PC-3 (cell line): ENCODE measurements at regions of chr2 and their contacts with region 1.

Region 1: GRCh38 chr2:63544017-63544627 is 44.2 kb downstream of the WDPCP start:
- DNase-seq: peak; percentile 28
- ATAC-seq: no peak; the same call in 1 of the 2 replicates
- H3K4me3 ChIP-seq: no peak overlapping the region
- H3K27ac ChIP-seq: no peak overlapping the region
- H3K4me1 ChIP-seq: no peaks in the 10 kb centered on the region
- H3K27me3 ChIP-seq: no peaks in the 10 kb centered on the region
- CTCF ChIP-seq: peak; percentile 79

Region 2: DNA sequence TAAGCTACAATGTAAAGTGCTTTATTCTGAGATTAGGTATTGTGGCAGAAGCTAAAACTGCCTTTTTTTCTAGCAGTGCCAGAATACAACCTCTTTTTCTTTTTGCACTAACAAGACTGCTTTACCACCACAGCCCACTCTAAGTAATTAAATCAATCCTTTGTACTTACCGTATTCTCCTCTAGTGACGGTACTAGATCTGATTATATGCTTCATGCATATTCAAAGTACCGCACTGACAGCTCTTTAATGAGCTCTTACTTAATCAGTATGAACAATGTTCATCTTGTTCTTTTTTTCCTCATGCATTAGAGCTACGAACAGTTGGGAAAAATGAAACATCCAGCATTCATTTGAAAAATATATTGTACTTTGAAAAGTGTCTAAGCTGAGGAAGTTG is 509.6 kb before region 1 on chr2:
- CTCF ChIA-PET with region 1: no interaction called
- POLR2A ChIA-PET with region 1: no interaction called
- intact Hi-C with region 1: no loop called
- DNase-seq: no peak
- ATAC-seq: no peak
- H3K4me3 ChIP-seq: no peak overlapping the region
- H3K27ac ChIP-seq: no peak overlapping the region
- H3K4me1 ChIP-seq: peaks cover 15% of the 10 kb centered on the region
- H3K27me3 ChIP-seq: no peaks in the 10 kb centered on the region
- CTCF ChIP-seq: no peak

Region 3: GRCh38 chr2:63497576-63497975 is 46.5 kb before region 1 on chr2:
- CTCF ChIA-PET with region 1: no interaction called
- POLR2A ChIA-PET with region 1: no interaction called
- intact Hi-C with region 1: loop called (anchors 10 kb)
- DNase-seq: no peak
- ATAC-seq: no peak
- H3K4me3 ChIP-seq: no peak overlapping the region
- H3K27ac ChIP-seq: no peak overlapping the region
- H3K4me1 ChIP-seq: no peaks in the 10 kb centered on the region
- H3K27me3 ChIP-seq: no peaks in the 10 kb centered on the region
- CTCF ChIP-seq: no peak

Region 4: GRCh38 chr2:63530880-63531279 is 13.2 kb before region 1 on chr2:
- CTCF ChIA-PET with region 1: no interaction called
- POLR2A ChIA-PET with region 1: no interaction called
- intact Hi-C with region 1: no loop called
- DNase-seq: no peak
- ATAC-seq: no peak
- H3K4me3 ChIP-seq: no peak overlapping the region
- H3K27ac ChIP-seq: no peak overlapping the region
- H3K4me1 ChIP-seq: no peaks in the 10 kb centered on the region
- H3K27me3 ChIP-seq: no peaks in the 10 kb centered on the region
- CTCF ChIP-seq: no peak

Region 5: GRCh38 chr2:63698825-63699548 is 154.9 kb after region 1 on chr2:
- CTCF ChIA-PET with region 1: no interaction called
- POLR2A ChIA-PET with region 1: no interaction called
- intact Hi-C with region 1: no loop called
- DNase-seq: peak; percentile 93
- ATAC-seq: peak; percentile 89
- H3K4me3 ChIP-seq: peak overlapping the region; percentile 34
- H3K27ac ChIP-seq: peak overlapping the region; percentile 93
- H3K4me1 ChIP-seq: peaks cover 41% of the 10 kb centered on the region
- H3K27me3 ChIP-seq: no peaks in the 10 kb centered on the region
- CTCF ChIP-seq: peak; percentile 72